ENCODE measurements at regions of chr6 and their contacts with region 1.

Region 1: DNA sequence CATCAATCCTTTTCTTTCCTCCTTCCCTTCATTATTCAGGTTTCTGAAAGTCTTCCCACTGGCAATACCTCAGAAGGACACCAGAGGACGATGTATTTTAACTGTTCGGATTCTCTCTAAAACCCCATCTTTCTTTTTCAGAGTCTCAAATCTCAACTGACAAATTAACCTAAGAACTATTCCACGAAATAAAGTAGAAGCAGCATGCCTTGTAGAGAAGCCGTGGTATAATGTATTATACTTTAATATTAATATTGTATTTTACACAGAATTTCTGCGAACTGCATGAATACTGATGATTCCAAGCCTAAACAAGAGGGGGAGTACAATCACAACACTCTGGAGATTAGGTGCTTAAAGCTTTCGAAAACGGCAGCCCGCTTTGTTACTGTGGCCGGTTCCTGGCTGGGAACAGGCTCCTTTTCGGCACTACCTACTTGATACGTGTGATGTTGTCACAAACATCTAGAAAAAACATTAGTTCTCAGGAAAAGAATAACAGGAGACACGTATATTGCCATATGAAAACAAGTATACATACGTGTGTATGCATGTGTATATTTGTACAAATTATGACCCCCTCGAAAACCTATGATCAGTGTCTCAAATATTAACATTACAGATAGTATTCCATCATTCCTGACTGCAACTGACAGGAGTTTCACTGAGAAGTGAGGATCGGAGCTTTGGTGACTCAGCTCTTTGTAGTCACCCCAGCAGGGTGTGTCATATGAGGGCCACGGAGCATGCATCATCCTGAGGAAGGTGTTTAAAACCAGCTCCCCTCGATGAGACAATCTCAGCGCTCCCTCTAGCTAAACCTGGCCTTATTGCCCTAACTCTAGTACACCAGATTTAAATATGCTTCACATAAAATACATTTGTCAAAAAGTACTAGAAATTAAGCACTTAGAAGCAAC is 319.7 kb upstream of the TCF21 start:
- DNase-seq: peak; percentile 92
- H3K4me3 ChIP-seq: peak overlapping the region; percentile 43 to 50 (median 46)
- H3K27ac ChIP-seq: peak overlapping the region; percentile 92
- H3K4me1 ChIP-seq: peaks cover 4% of the 10 kb centered on the region
- H3K27me3 ChIP-seq: peaks cover 2% of the 10 kb centered on the region
- CTCF ChIP-seq: peak; percentile 98

Region 2: GRCh38 chr6:133191323-133191722 is 377.9 kb before region 1 on chr6:
- CTCF ChIA-PET with region 1: interaction called, 23 read pairs
- dilution Hi-C with region 1: no loop called
- in situ Hi-C with region 1: no loop called
- intact Hi-C with region 1: no loop called
- DNase-seq: no peak
- H3K4me3 ChIP-seq: no peak overlapping the region
- H3K27ac ChIP-seq: no peak overlapping the region
- H3K4me1 ChIP-seq: no peaks in the 10 kb centered on the region
- H3K27me3 ChIP-seq: peaks cover 12% of the 10 kb centered on the region
- CTCF ChIP-seq: no peak

Region 3: GRCh38 chr6:133314947-133315346 is 254.3 kb before region 1 on chr6:
- CTCF ChIA-PET with region 1: no interaction called
- dilution Hi-C with region 1: no loop called
- in situ Hi-C with region 1: no loop called
- intact Hi-C with region 1: no loop called
- DNase-seq: no peak
- H3K4me3 ChIP-seq: no peak overlapping the region
- H3K27ac ChIP-seq: no peak overlapping the region
- H3K4me1 ChIP-seq: no peaks in the 10 kb centered on the region
- H3K27me3 ChIP-seq: peaks cover 18% of the 10 kb centered on the region
- CTCF ChIP-seq: no peak

Region 4: DNA sequence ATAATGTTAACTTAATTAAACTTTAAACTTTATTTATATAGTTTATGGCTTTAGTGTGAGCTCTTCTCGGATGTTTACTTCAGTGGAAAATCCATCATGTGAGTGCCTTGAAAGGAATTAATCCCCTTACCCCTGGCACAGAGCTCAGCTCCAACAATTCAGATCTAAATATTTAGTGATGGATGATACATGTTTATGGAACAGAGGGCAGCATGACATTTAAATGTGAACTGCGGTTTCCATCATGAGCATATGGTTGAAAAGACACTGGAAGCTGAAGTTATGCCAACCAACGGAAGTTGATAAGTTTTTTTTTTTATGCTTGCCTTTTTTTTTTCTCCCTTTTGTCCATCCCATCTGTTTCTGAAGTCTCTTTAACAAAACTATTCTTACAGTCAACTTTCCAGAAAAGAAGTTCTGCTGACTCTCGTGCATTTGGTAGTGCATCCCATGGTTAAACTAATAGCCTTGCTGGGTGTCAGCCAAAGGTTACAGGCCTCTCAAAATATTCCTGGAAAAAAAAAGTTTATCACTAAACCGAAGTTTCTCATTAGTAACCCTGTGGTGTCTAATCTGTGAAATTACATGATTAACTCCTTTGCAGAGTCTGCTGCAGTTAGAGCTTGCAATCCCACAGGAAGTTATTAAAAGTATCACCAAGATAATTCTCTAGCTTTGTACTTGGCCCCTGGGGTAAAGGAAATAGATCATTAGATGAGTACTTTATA is 75.8 kb after region 1 on chr6:
- CTCF ChIA-PET with region 1: no interaction called
- dilution Hi-C with region 1: no loop called
- in situ Hi-C with region 1: no loop called
- intact Hi-C with region 1: loop called (anchors 5 kb)
- DNase-seq: no peak
- H3K4me3 ChIP-seq: no peak overlapping the region
- H3K27ac ChIP-seq: no peak overlapping the region
- H3K4me1 ChIP-seq: peaks cover 12% of the 10 kb centered on the region
- H3K27me3 ChIP-seq: no peaks in the 10 kb centered on the region
- CTCF ChIP-seq: no peak

Region 5: GRCh38 chr6:133837801-133838349 is 268.6 kb after region 1 on chr6:
- CTCF ChIA-PET with region 1: interaction called, 17 read pairs
- dilution Hi-C with region 1: no loop called
- in situ Hi-C with region 1: loop called (anchors 5 to 10 kb)
- intact Hi-C with region 1: loop called (anchors 1 kb)
- DNase-seq: peak; percentile 69
- H3K4me3 ChIP-seq: peak overlapping the region; percentile 46 to 76 (median 62)
- H3K27ac ChIP-seq: peak overlapping the region; percentile 38
- H3K4me1 ChIP-seq: peaks cover 3% of the 10 kb centered on the region
- H3K27me3 ChIP-seq: no peaks in the 10 kb centered on the region
- CTCF ChIP-seq: peak; percentile 82 to 93

Region 6: DNA sequence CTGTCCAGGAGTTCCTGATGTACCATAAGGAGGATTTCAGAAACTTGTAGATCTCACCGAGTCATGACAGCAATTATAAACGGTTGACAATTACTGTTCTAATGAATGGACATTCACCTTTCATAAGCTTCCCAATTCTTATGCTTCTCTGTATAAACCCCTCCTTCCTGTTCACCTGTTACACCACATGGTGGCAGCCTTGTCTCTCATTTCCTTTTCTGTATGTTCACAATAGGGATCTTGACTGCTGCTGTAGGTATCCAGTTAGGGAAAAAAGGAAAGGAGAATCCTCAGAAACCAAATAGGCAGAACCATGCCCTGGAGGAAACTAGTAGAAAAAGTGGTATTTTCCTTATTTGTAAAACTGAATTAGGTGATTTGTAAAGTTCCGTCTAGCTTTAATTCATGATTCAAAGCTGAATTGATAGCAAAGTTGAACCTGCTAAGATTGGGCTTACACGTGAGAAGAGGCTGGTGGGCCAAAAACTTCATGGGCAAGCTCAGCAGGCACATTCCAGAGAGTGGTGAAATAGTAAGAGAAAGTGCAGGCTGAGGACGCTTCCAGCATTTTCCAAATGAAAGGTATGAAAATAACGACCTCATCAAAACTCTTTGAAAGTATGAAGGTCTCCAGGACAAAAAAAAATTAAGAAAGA is 354.8 kb after region 1 on chr6:
- CTCF ChIA-PET with region 1: no interaction called
- dilution Hi-C with region 1: no loop called
- in situ Hi-C with region 1: loop called (anchors 5 kb)
- intact Hi-C with region 1: loop called (anchors 1 kb)
- DNase-seq: peak; percentile 59
- H3K4me3 ChIP-seq: no peak overlapping the region
- H3K27ac ChIP-seq: no peak overlapping the region
- H3K4me1 ChIP-seq: no peaks in the 10 kb centered on the region
- H3K27me3 ChIP-seq: no peaks in the 10 kb centered on the region
- CTCF ChIP-seq: peak; percentile 78 to 87